B cell (primary cell): ENCODE measurements at regions of chr19 and their contacts with region 1.

Region 1: GRCh38 chr19:7919610-7920518 is at the start of gene SNAPC2:
- DNase-seq: peak; percentile 99
- ATAC-seq: peak; percentile 56
- H3K4me3 ChIP-seq: peak within 1 kb of the TSS; percentile 55 to 84 (median 75)
- H3K4me3 Mint-ChIP-seq: peak within 1 kb of the TSS; percentile 95
- H3K27ac ChIP-seq: peak within 1 kb of the TSS; percentile 73 to 74
- H3K27ac Mint-ChIP-seq: peak within 1 kb of the TSS; percentile 96
- H3K4me1 ChIP-seq: peaks cover 57 to 61% of the 10 kb centered on the region in 2 donors
- H3K4me1 Mint-ChIP-seq: peaks cover 48% of the 10 kb centered on the region
- H3K27me3 ChIP-seq: peaks cover 0 to 42% (median 24%) of the 10 kb centered on the region in 4 experiments
- H3K27me3 Mint-ChIP-seq: peaks cover 22% of the 10 kb centered on the region
- CTCF ChIP-seq: no peak
- total RNA-seq, gene SNAPC2: 19.3 and 19.9 TPM in 2 replicates

Region 2: DNA sequence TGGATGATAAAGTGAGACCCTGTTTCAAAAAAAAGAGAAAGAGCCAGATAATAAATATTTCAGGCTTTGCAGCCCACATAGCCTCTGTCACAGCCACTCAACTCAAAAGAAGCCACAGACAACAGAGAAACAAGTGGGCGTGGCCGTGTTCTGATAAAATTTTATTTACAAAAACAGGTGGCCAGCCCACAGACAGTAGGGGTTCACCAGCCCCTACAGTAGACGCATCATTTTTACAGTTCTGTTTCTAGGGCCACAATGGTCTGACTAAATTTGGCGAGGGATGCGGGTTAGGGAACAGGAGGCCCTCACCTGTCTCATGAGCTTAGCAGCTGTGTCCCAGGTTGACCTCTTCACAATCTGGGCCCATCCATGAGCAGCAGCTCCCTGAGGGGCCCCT is 511.6 kb before region 1 on chr19:
- CTCF ChIA-PET with region 1: no interaction called
- POLR2A ChIA-PET with region 1: no interaction called
- intact Hi-C with region 1: no loop called
- DNase-seq: peak; percentile 26
- ATAC-seq: peak; percentile 50
- H3K4me3 ChIP-seq: no peak overlapping the region
- H3K4me3 Mint-ChIP-seq: peak overlapping the region; percentile 37
- H3K27ac ChIP-seq: peak overlapping the region in 1 of 2 donors; percentile 47
- H3K27ac Mint-ChIP-seq: peak overlapping the region; percentile 85
- H3K4me1 ChIP-seq: peaks cover 10 to 23% of the 10 kb centered on the region in 2 donors
- H3K4me1 Mint-ChIP-seq: peaks cover 28% of the 10 kb centered on the region
- H3K27me3 ChIP-seq: no peaks in the 10 kb centered on the region
- H3K27me3 Mint-ChIP-seq: no peaks in the 10 kb centered on the region
- CTCF ChIP-seq: no peak

Region 3: GRCh38 chr19:7829561-7830271 is 90.1 kb before region 1 on chr19 and contains the start of gene EVI5L:
- CTCF ChIA-PET with region 1: interaction called, 3 read pairs
- POLR2A ChIA-PET with region 1: no interaction called
- intact Hi-C with region 1: loop called (anchors 1 kb)
- DNase-seq: peak; percentile 99
- ATAC-seq: peak; percentile 81
- H3K4me3 ChIP-seq: peak within 1 kb of the TSS in 4 of 5 experiments; percentile 39 to 64 (median 55)
- H3K4me3 Mint-ChIP-seq: peak within 1 kb of the TSS; percentile 82
- H3K27ac ChIP-seq: peak within 1 kb of the TSS in 1 of 2 donors; percentile 62
- H3K27ac Mint-ChIP-seq: peak within 1 kb of the TSS; percentile 84
- H3K4me1 ChIP-seq: peaks cover 8 to 15% of the 10 kb centered on the region in 2 donors
- H3K4me1 Mint-ChIP-seq: peaks cover 24% of the 10 kb centered on the region
- H3K27me3 ChIP-seq: no peaks in the 10 kb centered on the region
- H3K27me3 Mint-ChIP-seq: no peaks in the 10 kb centered on the region
- CTCF ChIP-seq: no peak
- total RNA-seq, gene EVI5L: 11.2 and 11.8 TPM in 2 replicates

Region 4: DNA sequence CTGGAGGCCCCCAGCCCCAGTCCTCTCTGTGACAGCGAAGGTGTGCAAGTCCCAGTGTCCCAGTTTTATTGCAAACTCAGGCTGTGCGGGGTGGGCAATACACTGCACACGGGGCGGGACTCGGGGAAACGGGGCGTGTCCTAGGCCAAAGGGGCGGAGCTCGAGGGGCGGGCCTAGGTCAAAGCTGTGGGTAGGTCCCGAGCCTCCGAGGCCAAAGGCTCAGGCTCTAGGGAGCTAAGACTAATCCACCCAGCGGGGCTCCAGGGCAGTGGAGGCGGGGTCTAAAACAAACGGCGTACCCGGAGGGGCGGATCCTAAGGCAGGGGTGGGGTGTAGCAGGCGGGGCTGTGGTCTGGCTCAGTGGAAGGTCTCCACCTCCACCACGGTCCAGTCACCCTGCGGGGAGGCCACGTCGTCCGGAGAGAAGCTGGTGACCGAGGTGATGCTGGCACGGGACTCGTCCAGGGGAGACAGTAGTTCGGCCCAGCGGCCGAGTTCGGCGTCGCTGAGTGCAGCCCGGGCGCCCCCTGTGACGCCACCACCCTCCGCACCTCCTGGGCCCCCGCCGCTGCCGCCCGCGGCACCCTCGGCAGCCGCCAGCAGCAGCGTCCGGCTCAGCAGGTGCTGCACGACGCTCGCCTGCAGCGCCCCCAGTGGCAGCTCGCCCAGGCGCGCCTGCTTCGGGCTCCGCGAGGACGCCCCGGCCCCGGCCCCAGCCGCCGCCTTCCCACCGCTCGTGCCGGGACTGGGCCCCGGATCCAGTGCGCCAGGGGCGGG is 51.0 kb before region 1 on chr19:
- CTCF ChIA-PET with region 1: interaction called, 13 read pairs
- POLR2A ChIA-PET with region 1: interaction called, 11 read pairs
- intact Hi-C with region 1: loop called (anchors 1 kb)
- DNase-seq: peak; percentile 94
- ATAC-seq: peak; percentile 71
- H3K4me3 ChIP-seq: peak overlapping the region in 4 of 5 experiments; percentile 48 to 63 (median 56)
- H3K4me3 Mint-ChIP-seq: peak overlapping the region; percentile 86
- H3K27ac ChIP-seq: peak overlapping the region; percentile 29 to 48
- H3K27ac Mint-ChIP-seq: peak overlapping the region; percentile 65
- H3K4me1 ChIP-seq: peaks cover 40 to 47% of the 10 kb centered on the region in 2 donors
- H3K4me1 Mint-ChIP-seq: peaks cover 37% of the 10 kb centered on the region
- H3K27me3 ChIP-seq: peaks cover 0 to 82% (median 25%) of the 10 kb centered on the region in 4 experiments
- H3K27me3 Mint-ChIP-seq: peaks cover 32% of the 10 kb centered on the region
- CTCF ChIP-seq: peak; percentile 95

Region 5: DNA sequence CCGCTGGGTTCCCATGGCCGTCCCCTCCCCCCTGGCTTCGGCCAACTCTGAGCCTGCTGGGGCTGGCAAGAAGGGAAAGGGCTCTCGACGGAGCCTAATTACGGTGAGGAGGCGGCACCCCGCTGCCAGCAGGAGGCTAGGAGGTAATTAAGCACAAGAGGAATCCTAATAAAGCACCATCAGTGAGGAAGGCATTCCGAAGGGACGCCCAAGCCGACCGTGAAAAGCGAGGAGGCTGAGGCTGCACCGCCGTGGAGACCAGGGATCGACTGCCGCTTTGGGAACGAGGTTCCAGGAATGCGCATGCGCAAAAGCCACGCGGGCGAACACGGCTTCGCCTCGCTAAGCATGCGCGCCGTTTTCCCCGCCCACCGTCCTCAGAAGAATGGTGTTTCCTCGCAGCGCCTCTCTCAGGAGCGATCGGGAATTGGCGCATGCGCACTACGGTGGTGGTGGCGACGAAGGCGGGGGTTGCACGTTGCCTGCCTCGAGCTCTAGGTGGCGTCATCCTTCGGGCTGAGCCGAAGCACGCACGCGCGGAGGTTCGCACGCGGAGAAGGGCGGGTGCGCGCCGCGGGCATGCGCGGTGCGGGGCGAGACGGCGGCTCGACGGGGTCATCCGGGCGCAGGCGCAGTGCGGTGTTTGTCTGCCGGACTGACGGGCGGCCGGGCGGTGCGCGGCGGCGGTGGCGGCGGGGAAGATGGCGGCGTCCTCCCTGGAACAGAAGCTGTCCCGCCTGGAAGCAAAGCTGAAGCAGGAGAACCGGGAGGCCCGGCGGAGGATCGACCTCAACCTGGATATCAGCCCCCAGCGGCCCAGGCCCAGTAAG is 16.4 kb before region 1 on chr19 and contains the start of gene MAP2K7:
- CTCF ChIA-PET with region 1: interaction called, 12 read pairs
- POLR2A ChIA-PET with region 1: interaction called, 15 read pairs
- intact Hi-C with region 1: loop called (anchors 1 kb)
- DNase-seq: peak; percentile 100
- ATAC-seq: peak; percentile 89
- H3K4me3 ChIP-seq: peak within 1 kb of the TSS; percentile 53 to 79 (median 73)
- H3K4me3 Mint-ChIP-seq: peak within 1 kb of the TSS; percentile 95
- H3K27ac ChIP-seq: peak within 1 kb of the TSS; percentile 67 to 82
- H3K27ac Mint-ChIP-seq: peak within 1 kb of the TSS; percentile 99
- H3K4me1 ChIP-seq: peaks cover 20 to 21% of the 10 kb centered on the region in 2 donors
- H3K4me1 Mint-ChIP-seq: peaks cover 29% of the 10 kb centered on the region
- H3K27me3 ChIP-seq: no peaks in the 10 kb centered on the region
- H3K27me3 Mint-ChIP-seq: no peaks in the 10 kb centered on the region
- CTCF ChIP-seq: peak; percentile 66
- total RNA-seq, gene MAP2K7: 71.9 and 76.3 TPM in 2 replicates